ENCODE measurements at regions of chr6 and their contacts with region 1.

Region 1: DNA sequence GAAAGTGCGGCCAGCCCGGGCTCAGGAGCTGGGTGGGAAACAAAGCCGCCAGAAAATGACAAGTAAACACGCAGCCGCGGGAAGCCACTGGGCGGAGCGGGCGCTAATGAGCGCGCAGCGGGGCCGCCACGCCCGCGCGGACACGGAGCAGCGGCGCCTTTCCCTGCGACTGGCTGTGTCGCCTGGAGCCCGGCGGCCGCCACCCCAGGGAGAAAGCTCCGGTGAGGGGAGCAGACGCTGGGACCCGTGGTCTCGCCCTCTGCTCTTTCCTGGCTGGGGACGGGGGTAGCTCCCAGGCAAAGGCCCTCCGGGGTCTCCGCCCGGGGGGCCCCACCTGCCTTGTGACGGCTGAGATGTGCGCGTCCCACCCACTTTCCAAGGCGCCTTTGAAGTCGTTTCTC is 54.9 kb downstream of the PRR18 start:
- DNase-seq: peak in 1 of 5 donors; percentile 46
- H3K4me3 ChIP-seq: peak overlapping the region in 1 of 2 donors; percentile 14
- H3K4me3 Mint-ChIP-seq: peak overlapping the region in 7 of 8 donors; percentile 49 to 88 (median 82)
- H3K27ac ChIP-seq: no peak overlapping the region
- H3K27ac Mint-ChIP-seq: peak overlapping the region in 2 of 7 donors; percentile 8 to 48
- H3K4me1 ChIP-seq: peaks cover 24% of the 10 kb centered on the region
- H3K4me1 Mint-ChIP-seq: peaks cover 4 to 37% (median 23%) of the 10 kb centered on the region in 4 donors
- H3K27me3 ChIP-seq: peaks cover 7% of the 10 kb centered on the region
- H3K27me3 Mint-ChIP-seq: peaks cover 11 to 14% of the 10 kb centered on the region in 2 donors

Region 2: GRCh38 chr6:166237617-166238016 is 15.7 kb before region 1 on chr6:
- CTCF ChIA-PET with region 1: interaction called, 20 read pairs
- POLR2A ChIA-PET with region 1: interaction called, 30 read pairs
- intact Hi-C with region 1: no loop called
- DNase-seq: no peak
- H3K4me3 ChIP-seq: no peak overlapping the region
- H3K4me3 Mint-ChIP-seq: no peak overlapping the region
- H3K27ac ChIP-seq: no peak overlapping the region
- H3K27ac Mint-ChIP-seq: no peak overlapping the region
- H3K4me1 ChIP-seq: peaks cover 3% of the 10 kb centered on the region
- H3K4me1 Mint-ChIP-seq: peaks cover 0 to 9% (median 9%) of the 10 kb centered on the region in 4 donors
- H3K27me3 ChIP-seq: no peaks in the 10 kb centered on the region
- H3K27me3 Mint-ChIP-seq: peaks cover 10 to 15% of the 10 kb centered on the region in 2 donors